ENCODE measurements at regions of chr18 and their contacts with region 1.

Region 1: DNA sequence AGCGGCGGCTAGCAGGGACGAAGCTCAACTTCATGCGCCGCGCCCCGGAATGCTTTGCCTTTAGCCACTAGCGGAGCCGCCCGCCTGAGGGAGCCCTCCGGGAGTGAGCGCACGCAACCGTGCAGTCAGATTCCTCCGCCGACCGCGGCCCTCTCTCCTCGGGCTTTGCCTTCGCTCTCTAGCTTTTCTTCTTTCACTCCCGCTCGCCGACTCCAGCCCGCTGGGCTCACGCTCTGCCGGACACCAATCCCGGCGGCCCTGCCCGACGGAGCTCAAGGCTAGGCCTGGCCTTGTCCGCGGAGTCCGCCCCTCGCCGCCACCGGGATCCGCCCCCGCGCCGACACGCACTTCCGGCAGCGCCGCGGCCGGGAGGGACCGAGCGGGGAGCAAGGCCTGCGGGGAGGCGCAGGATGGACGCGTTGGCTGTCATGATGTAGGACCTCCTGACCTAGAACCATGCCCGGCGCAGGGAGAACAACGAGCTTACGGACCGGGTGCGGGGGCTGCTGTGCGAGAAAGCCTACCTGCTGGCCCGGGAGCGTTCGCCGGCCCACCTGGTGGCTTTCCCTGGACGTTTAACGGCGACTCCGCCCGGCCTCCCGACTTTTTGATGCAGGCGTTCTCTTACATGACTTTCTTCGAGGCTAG is 40.8 kb upstream of the AKAIN1 start:
- DNase-seq: peak; percentile 90 to 93 (median 91)
- ATAC-seq: peak; percentile 98
- H3K4me3 ChIP-seq: peak overlapping the region; percentile 58
- H3K4me1 ChIP-seq: peaks cover 24% of the 10 kb centered on the region
- CTCF ChIP-seq: no peak

Region 2: DNA sequence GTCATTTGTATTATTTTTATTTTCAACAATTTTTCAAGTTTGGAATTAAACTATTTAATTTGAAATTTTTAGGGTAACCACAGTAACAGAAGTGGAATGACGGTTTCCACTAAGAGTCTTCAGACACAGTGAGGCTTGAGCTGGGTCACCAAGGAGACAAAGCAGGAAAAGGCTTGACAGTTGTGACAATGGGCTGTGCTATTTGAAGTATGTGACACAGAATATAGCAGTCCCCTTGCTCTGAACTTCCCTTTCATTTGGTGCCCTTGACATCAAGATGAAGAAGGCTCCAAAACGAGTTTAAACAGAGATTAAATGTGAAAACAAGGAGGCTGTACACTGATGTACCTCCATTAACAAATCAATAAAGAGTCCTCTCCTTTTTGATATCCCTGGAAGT is 517.3 kb before region 1 on chr18:
- intact Hi-C with region 1: no loop called
- DNase-seq: no peak
- ATAC-seq: no peak
- H3K4me3 ChIP-seq: no peak overlapping the region
- H3K4me1 ChIP-seq: no peaks in the 10 kb centered on the region
- CTCF ChIP-seq: no peak

Region 3: GRCh38 chr18:5295981-5296705 is 58.3 kb after region 1 on chr18:
- intact Hi-C with region 1: loop called (anchors 5 kb)
- DNase-seq: peak; percentile 98 to 99 (median 99)
- ATAC-seq: peak; percentile 88
- H3K4me3 ChIP-seq: peak overlapping the region; percentile 67
- H3K4me1 ChIP-seq: peaks cover 8% of the 10 kb centered on the region
- CTCF ChIP-seq: no peak

Region 4: GRCh38 chr18:5630057-5630899 is 392.4 kb after region 1 on chr18:
- intact Hi-C with region 1: loop called in 1 of 2 experiments (anchors 5 kb)
- DNase-seq: peak; percentile 86 to 93 (median 88)
- ATAC-seq: peak; percentile 84
- H3K4me3 ChIP-seq: peak overlapping the region; percentile 36
- H3K4me1 ChIP-seq: peaks cover 9% of the 10 kb centered on the region
- CTCF ChIP-seq: no peak